AG04450 (cell line): ENCODE measurements at regions of chr20 and their contacts with region 1.

Region 1: DNA sequence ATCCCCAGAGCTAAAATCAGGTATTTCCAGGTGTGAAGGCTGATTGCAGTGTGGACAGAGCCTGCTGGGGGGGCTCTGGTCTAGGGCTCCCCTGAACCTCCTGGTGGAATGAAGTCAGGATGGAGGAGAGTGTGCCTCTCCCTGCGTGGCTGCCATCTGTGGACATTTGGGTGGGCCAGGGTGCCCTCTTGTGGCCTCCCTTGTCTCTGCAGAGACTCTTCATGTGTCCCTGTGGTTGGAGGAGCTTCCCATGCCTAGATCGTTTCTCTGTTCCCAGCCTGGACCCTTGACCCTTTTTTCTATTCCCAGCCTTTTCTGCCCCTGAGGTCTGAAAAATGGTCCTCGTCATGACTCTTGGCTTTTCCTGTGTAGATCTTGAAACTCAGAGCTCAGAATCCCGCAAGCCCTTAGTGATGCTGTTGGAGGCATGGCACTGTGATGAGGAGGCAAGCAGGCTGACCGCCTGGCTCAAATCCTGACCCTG is 9.9 kb upstream of the PSMF1 start:
- DNase-seq: no peak
- H3K4me3 ChIP-seq: no peak overlapping the region
- H3K27ac ChIP-seq: no peak overlapping the region
- H3K27me3 ChIP-seq: peaks cover 3% of the 10 kb centered on the region
- CTCF ChIP-seq: peak; percentile 80

Region 2: DNA sequence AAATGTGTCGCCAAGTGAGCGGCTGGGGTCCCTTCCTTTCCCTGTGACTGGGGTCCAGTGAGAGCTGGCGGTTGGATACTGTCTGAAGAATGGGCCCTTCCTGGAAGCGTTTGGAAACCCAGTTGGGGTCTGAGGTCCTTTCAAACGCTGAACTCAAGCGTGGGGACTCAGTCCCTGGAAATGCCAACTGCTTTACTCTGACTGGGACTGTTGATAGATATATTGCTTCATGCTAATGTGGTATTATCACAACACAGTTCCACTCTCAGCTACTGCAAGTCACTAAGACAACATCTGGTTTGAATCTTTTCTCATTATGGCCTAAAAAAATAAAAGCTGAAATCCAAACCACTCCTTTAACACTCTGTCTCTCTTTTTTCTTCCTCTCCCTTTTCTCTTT is 13.7 kb before region 1 on chr20:
- CTCF ChIA-PET with region 1: interaction called, 23 read pairs
- POLR2A ChIA-PET with region 1: no interaction called
- DNase-seq: no peak
- H3K4me3 ChIP-seq: no peak overlapping the region
- H3K27ac ChIP-seq: no peak overlapping the region
- H3K27me3 ChIP-seq: peaks cover 3% of the 10 kb centered on the region
- CTCF ChIP-seq: no peak

Region 3: DNA sequence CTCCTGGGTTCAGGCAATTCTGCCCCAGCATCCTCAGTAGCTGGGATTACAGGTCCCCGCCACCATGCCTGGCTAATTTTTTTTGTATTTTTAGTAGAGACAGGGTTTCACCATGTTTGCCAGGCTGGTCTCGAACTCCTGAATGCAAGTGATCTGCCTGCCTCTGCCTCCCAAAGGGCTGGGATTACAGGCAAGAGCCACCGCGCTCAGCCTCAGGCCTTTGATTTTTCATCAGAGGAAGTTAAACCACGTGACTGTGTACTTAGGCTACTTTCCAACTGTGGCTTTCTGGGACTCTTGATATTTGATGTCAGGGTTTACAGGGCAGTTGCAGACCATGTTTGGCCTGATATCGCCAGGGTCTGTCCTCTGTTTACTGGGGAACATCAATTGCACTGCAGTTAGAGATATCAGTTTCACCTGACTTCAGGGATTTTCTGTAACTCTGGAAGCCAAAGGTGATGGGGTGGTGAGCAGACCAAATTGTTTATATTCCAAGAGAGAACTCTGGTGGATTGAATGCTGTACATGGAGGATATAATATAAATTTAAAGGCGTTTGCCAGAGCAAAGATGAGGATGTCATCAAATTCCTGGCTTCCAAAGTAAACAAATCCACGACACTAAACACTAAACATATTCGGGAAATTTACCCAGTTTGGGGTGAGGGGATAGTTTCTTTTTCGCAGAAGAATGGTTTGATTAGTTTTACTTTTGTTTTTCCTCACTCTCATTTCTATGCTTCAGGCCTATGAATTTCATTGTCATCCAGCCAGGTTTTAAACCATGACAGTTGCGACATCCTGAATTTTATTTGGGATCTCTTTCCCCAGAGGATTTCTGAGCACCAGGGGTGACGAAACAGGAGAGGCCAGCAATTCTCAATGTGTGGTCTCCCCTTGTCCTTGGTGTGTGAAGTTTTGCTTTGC is 14.2 kb after region 1 on chr20:
- CTCF ChIA-PET with region 1: interaction called, 21 read pairs
- POLR2A ChIA-PET with region 1: no interaction called
- DNase-seq: no peak
- H3K4me3 ChIP-seq: peak overlapping the region; percentile 34
- H3K27ac ChIP-seq: peak overlapping the region; percentile 81
- H3K27me3 ChIP-seq: no peaks in the 10 kb centered on the region
- CTCF ChIP-seq: no peak

Region 4: GRCh38 chr20:1674361-1674760 is 565.9 kb after region 1 on chr20:
- CTCF ChIA-PET with region 1: no interaction called
- POLR2A ChIA-PET with region 1: no interaction called
- DNase-seq: no peak
- H3K4me3 ChIP-seq: no peak overlapping the region
- H3K27ac ChIP-seq: peak overlapping the region; percentile 21
- H3K27me3 ChIP-seq: peaks cover 6% of the 10 kb centered on the region
- CTCF ChIP-seq: no peak